ENCODE measurements at regions of chr1 and their contacts with region 1.

Region 1: GRCh38 chr1:24199289-24199900 is 12.3 kb upstream of the IFNLR1 start:
- DNase-seq: peak; percentile 26
- H3K4me3 ChIP-seq: peak overlapping the region; percentile 26
- H3K27ac ChIP-seq: no peak overlapping the region
- H3K4me1 ChIP-seq: peaks cover 7% of the 10 kb centered on the region
- H3K27me3 ChIP-seq: peaks cover 2% of the 10 kb centered on the region
- CTCF ChIP-seq: peak; percentile 89

Region 2: DNA sequence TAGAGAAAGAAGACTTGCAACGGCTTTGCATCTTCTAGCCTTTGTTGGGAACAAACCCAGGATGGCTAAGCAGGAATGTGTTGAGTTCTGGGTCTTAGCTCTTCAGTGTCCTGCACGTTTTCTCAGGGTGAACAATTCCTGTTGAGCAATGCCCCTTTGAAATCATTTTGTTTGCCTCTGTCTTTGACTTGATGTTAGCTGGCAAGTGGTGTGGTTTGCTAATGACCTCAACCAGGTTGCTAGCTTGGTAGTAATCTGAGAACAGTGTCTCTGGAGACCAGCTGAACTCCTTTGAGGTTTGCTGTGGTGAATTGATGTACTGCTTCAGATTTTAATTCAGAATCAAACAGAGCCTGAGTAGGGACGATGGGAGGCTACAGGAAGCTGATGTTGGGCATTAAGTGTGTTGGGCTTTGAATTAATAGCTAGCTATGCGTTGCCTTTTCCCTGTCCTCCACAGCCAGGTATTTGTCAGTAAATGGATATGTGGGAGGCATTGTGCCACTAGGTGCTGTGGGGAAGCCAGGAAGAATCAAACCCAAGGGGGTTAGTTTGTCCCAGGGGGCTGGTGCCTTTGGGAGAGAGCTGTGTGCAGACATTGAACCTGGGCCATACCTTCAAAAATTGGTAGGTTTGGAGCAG is 195.9 kb before region 1 on chr1:
- intact Hi-C with region 1: no loop called
- DNase-seq: no peak
- H3K4me3 ChIP-seq: no peak overlapping the region
- H3K27ac ChIP-seq: no peak overlapping the region
- H3K4me1 ChIP-seq: peaks cover 22% of the 10 kb centered on the region
- H3K27me3 ChIP-seq: no peaks in the 10 kb centered on the region
- CTCF ChIP-seq: no peak

Region 3: DNA sequence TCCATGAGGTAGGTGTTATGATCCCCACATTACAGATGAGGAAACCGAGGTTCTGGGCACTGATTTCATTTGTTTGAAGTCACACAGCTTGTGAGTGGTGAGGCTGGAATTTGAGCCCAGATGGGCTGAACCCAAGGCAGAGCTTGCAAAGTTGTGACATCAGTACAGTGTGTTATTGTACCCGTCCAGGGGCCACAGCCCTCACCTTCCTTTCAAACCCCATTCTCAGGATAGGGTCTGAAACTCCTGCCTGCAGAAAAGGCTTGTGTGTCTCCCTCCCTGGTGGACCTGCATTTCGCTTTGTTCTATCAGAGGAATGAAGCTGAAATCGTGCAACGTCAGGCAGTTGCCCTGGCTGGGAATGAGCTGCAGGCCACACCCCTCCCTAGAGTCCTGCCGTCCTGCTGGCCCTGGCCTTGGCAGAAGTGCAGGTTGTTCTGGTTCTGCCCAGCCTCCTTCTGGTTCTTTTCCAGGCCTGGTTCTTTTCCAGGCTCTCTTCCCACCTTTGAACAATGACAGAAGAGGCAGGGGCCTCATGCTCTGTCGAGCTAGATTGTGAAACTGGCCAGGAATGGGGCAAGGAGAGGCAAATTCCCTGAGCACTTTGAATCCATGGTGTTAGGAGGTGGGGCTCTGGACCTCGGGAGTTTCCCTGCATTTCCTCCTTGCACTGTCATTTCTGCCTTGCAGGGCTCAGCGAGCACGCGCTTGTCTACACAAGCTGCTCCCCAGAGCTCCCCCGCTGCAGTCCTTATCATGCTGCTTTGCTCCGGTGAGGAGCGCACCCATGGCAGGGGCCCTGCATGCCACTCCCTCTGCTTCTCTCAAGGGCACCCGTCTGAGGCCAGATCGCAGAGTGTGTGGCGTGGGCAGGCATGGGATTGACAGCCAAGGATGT is 79.3 kb before region 1 on chr1:
- intact Hi-C with region 1: no loop called
- DNase-seq: peak; percentile 53
- H3K4me3 ChIP-seq: peak overlapping the region; percentile 43
- H3K27ac ChIP-seq: peak overlapping the region; percentile 91
- H3K4me1 ChIP-seq: peaks cover 24% of the 10 kb centered on the region
- H3K27me3 ChIP-seq: peaks cover 35% of the 10 kb centered on the region
- CTCF ChIP-seq: no peak

Region 4: GRCh38 chr1:24391882-24392603 is 192.6 kb after region 1 on chr1:
- intact Hi-C with region 1: loop called (anchors 2 kb)
- DNase-seq: peak; percentile 49
- H3K4me3 ChIP-seq: peak overlapping the region; percentile 48
- H3K27ac ChIP-seq: peak overlapping the region; percentile 88
- H3K4me1 ChIP-seq: peaks cover 22% of the 10 kb centered on the region
- H3K27me3 ChIP-seq: no peaks in the 10 kb centered on the region
- CTCF ChIP-seq: peak; percentile 78